PC-3 (cell line): ENCODE measurements at regions of chr2 and their contacts with region 1.

Region 1: DNA sequence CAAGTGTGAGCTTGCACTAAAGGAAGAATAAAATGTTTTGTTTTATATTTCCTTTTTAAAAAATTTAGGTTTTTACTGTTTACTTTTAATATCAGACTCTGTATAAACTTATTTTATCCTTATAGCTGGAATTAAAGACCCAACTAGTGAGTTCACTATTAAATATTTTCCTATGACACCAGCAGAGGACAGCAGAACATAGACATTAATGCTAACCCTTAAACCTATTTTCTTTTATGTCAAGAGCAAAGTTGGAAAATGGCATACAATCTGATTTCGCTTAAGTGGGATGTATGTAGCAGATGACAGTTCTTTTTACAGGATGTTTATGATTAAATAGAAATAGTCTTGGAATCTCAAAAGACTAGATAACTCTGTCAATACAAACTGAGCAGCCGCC is 188.2 kb upstream of the XIRP2 start:
- DNase-seq: peak; percentile 47
- ATAC-seq: peak; percentile 67
- H3K4me3 ChIP-seq: no peak overlapping the region
- H3K27ac ChIP-seq: no peak overlapping the region
- H3K4me1 ChIP-seq: no peaks in the 10 kb centered on the region
- H3K27me3 ChIP-seq: 0 out of 2 replicates have a peak, but pooled peaks cover 3% of the 10 kb centered on the region
- CTCF ChIP-seq: peak; percentile 69

Region 2: GRCh38 chr2:165401285-165401852 is 1298.7 kb before region 1 on chr2:
- CTCF ChIA-PET with region 1: no interaction called
- POLR2A ChIA-PET with region 1: no interaction called
- intact Hi-C with region 1: loop called (anchors 1 kb)
- DNase-seq: peak; percentile 92
- ATAC-seq: peak; percentile 23
- H3K4me3 ChIP-seq: no peak overlapping the region
- H3K27ac ChIP-seq: no peak overlapping the region
- H3K4me1 ChIP-seq: peaks cover 23% of the 10 kb centered on the region
- H3K27me3 ChIP-seq: no peaks in the 10 kb centered on the region
- CTCF ChIP-seq: peak; percentile 97

Region 3: DNA sequence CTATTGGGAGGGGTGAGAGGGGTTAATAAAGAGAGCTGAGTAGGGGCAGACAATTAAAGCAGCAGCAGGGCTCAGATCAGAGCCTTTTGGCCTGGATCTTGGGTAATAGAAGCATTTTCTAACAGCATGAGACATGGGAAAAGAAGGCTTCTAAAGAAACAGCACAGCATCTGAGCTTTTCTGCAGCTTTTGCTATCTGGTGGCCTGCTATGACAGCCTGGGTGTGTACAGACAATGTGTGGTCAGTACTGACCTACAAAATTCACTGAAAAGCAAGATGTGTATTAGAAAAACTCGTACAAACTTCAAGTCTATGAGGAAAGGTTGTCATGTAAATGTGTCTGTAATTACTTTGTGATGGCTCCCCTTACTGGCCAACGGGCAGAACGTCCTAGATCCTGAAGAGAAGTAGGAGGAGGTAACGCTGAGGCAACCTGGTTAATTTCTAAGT is 1001.6 kb before region 1 on chr2:
- CTCF ChIA-PET with region 1: no interaction called
- POLR2A ChIA-PET with region 1: no interaction called
- intact Hi-C with region 1: loop called (anchors 1 kb)
- DNase-seq: peak; percentile 80
- ATAC-seq: peak; percentile 96
- H3K4me3 ChIP-seq: no peak overlapping the region
- H3K27ac ChIP-seq: no peak overlapping the region
- H3K4me1 ChIP-seq: no peaks in the 10 kb centered on the region
- H3K27me3 ChIP-seq: 0 out of 2 replicates have a peak, but pooled peaks cover 3% of the 10 kb centered on the region
- CTCF ChIP-seq: peak; percentile 79

Region 4: GRCh38 chr2:166627893-166628292 is 72.2 kb before region 1 on chr2:
- CTCF ChIA-PET with region 1: interaction called, 7 read pairs
- POLR2A ChIA-PET with region 1: no interaction called
- intact Hi-C with region 1: loop called (anchors 1 kb)
- DNase-seq: peak; percentile 19
- ATAC-seq: peak; percentile 48
- H3K4me3 ChIP-seq: no peak overlapping the region
- H3K27ac ChIP-seq: no peak overlapping the region
- H3K4me1 ChIP-seq: peaks cover 26% of the 10 kb centered on the region
- H3K27me3 ChIP-seq: no peaks in the 10 kb centered on the region
- CTCF ChIP-seq: peak; percentile 25; the same call in 1 of the 2 replicates

Region 5: GRCh38 chr2:166895243-166895642 is 195.2 kb after region 1 on chr2:
- CTCF ChIA-PET with region 1: no interaction called
- POLR2A ChIA-PET with region 1: no interaction called
- intact Hi-C with region 1: loop called (anchors 10 kb)
- DNase-seq: peak; percentile 25
- ATAC-seq: no peak
- H3K4me3 ChIP-seq: no peak overlapping the region
- H3K27ac ChIP-seq: no peak overlapping the region
- H3K4me1 ChIP-seq: no peaks in the 10 kb centered on the region
- H3K27me3 ChIP-seq: no peaks in the 10 kb centered on the region
- CTCF ChIP-seq: peak; percentile 43

Region 6: GRCh38 chr2:167127135-167127534 is 427.1 kb after region 1 on chr2:
- CTCF ChIA-PET with region 1: no interaction called
- POLR2A ChIA-PET with region 1: no interaction called
- intact Hi-C with region 1: loop called (anchors 2 kb)
- DNase-seq: peak; percentile 70
- ATAC-seq: peak; percentile 95
- H3K4me3 ChIP-seq: no peak overlapping the region
- H3K27ac ChIP-seq: no peak overlapping the region
- H3K4me1 ChIP-seq: peaks cover 3% of the 10 kb centered on the region; the same call in 1 of the 2 replicates
- H3K27me3 ChIP-seq: no peaks in the 10 kb centered on the region
- CTCF ChIP-seq: peak; percentile 68

Region 7: GRCh38 chr2:167212014-167212648 is 512.1 kb after region 1 on chr2:
- CTCF ChIA-PET with region 1: interaction called, 4 read pairs
- POLR2A ChIA-PET with region 1: no interaction called
- intact Hi-C with region 1: loop called (anchors 1 kb)
- DNase-seq: peak; percentile 90
- ATAC-seq: peak; percentile 72
- H3K4me3 ChIP-seq: no peak overlapping the region
- H3K27ac ChIP-seq: no peak overlapping the region
- H3K4me1 ChIP-seq: 0 out of 2 replicates have a peak, but pooled peaks cover 5% of the 10 kb centered on the region
- H3K27me3 ChIP-seq: no peaks in the 10 kb centered on the region
- CTCF ChIP-seq: peak; percentile 91